ENCODE measurements at regions of chr1 and their contacts with region 1.

Region 1: GRCh38 chr1:179984942-179985341 is 30.3 kb downstream of the CEP350 start:
- DNase-seq: no peak
- ATAC-seq: peak; percentile 54; the same call in 2 of the 3 replicates
- H3K4me3 ChIP-seq: no peak overlapping the region
- H3K27ac ChIP-seq: no peak overlapping the region
- H3K4me1 ChIP-seq: no peaks in the 10 kb centered on the region
- H3K27me3 ChIP-seq: no peaks in the 10 kb centered on the region
- CTCF ChIP-seq: no peak
- EP300 ChIP-seq: no peak
- POLR2A ChIP-seq: no peak
- RAD21 ChIP-seq: no peak

Region 2: GRCh38 chr1:179877586-179878265 is 107.2 kb before region 1 on chr1 and contains the start of gene TOR1AIP2:
- CTCF ChIA-PET with region 1: no interaction called
- POLR2A ChIA-PET with region 1: no interaction called
- RAD21 ChIA-PET with region 1: no interaction called
- SMC1A ChIA-PET with region 1: no interaction called
- in situ Hi-C with region 1: no loop called
- intact Hi-C with region 1: no loop called
- DNase-seq: no peak
- ATAC-seq: peak; percentile 81
- H3K4me3 ChIP-seq: peak within 1 kb of the TSS; percentile 72
- H3K27ac ChIP-seq: peak within 1 kb of the TSS; percentile 59
- H3K4me1 ChIP-seq: peaks cover 12% of the 10 kb centered on the region; the same call in 1 of the 2 replicates
- H3K27me3 ChIP-seq: no peaks in the 10 kb centered on the region
- CTCF ChIP-seq: no peak
- EP300 ChIP-seq: no peak
- POLR2A ChIP-seq: peak; percentile 92
- RAD21 ChIP-seq: no peak
- polyA plus RNA-seq, gene TOR1AIP2: 5.3 to 13.1 TPM

Region 3: GRCh38 chr1:179966551-179966950 is 18.4 kb before region 1 on chr1:
- CTCF ChIA-PET with region 1: no interaction called
- POLR2A ChIA-PET with region 1: no interaction called
- RAD21 ChIA-PET with region 1: no interaction called
- SMC1A ChIA-PET with region 1: interaction called, 14 read pairs
- in situ Hi-C with region 1: no loop called
- intact Hi-C with region 1: no loop called
- DNase-seq: no peak
- ATAC-seq: no peak
- H3K4me3 ChIP-seq: no peak overlapping the region
- H3K27ac ChIP-seq: no peak overlapping the region
- H3K4me1 ChIP-seq: no peaks in the 10 kb centered on the region
- H3K27me3 ChIP-seq: no peaks in the 10 kb centered on the region
- CTCF ChIP-seq: no peak
- EP300 ChIP-seq: no peak
- POLR2A ChIP-seq: no peak
- RAD21 ChIP-seq: no peak

Region 4: DNA sequence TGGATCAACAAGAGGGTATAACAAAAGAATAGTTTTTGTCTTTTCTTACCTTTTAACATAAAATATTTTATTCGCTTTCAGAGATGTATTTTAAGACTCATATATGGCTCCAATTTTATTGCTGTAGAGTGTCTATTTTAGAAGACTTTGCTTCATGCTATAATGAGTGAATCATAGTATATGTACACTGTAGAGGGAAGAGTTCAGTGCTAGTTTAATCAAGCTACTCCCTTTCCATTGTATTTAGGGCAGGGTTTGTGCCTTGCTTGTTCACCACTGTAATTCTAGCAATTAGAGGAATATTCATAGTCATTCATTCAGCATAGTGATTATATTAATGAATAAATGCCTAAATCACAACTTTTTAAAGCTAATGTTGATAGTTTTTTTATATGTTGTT is 48.4 kb after region 1 on chr1:
- CTCF ChIA-PET with region 1: no interaction called
- POLR2A ChIA-PET with region 1: no interaction called
- RAD21 ChIA-PET with region 1: no interaction called
- SMC1A ChIA-PET with region 1: no interaction called
- in situ Hi-C with region 1: loop called (anchors 5 kb)
- intact Hi-C with region 1: no loop called
- DNase-seq: no peak
- ATAC-seq: no peak
- H3K4me3 ChIP-seq: no peak overlapping the region
- H3K27ac ChIP-seq: no peak overlapping the region
- H3K4me1 ChIP-seq: no peaks in the 10 kb centered on the region
- H3K27me3 ChIP-seq: no peaks in the 10 kb centered on the region
- CTCF ChIP-seq: no peak
- EP300 ChIP-seq: no peak
- POLR2A ChIP-seq: no peak
- RAD21 ChIP-seq: no peak

Measured in GM12878 (cell line).